Posterior vena cava (tissue), 2 donors: ENCODE measurements at regions of chr1 and their contacts with region 1.

Region 1: DNA sequence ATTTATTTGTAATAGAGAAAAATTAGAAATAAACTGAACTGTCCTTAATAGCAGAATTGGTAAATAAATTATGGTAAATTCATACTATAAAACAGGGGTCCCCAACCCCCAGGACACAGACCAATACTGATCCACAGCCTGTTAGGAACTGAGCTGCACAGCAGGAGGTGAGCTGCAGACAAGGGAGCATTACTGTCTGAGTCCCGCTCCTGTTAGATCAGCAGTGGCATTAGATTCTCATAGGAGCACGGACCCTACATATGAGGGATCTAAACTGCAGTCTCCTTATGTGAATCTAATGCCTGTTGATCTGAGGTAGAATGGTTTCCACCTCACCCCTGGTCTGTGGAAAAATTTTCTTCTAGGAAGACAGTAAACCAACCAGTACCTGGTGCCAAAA is 7.5 kb downstream of the WDR47 start:
- DNase-seq: no peak

Region 2: GRCh38 chr1:109075531-109076490 is 41.4 kb after region 1 on chr1 and contains the start of gene TAF13:
- intact Hi-C with region 1: no loop called
- DNase-seq: peak; percentile 99
- total RNA-seq, gene TAF13: 63.3 to 99.1 TPM

Region 3: GRCh38 chr1:109739738-109740660 is 705.6 kb after region 1 on chr1:
- intact Hi-C with region 1: loop called in 1 of 2 experiments (anchors 10 kb)
- DNase-seq: peak; percentile 93